Panc1 (cell line): ENCODE measurements at regions of chr7 and their contacts with region 1.

Region 1: DNA sequence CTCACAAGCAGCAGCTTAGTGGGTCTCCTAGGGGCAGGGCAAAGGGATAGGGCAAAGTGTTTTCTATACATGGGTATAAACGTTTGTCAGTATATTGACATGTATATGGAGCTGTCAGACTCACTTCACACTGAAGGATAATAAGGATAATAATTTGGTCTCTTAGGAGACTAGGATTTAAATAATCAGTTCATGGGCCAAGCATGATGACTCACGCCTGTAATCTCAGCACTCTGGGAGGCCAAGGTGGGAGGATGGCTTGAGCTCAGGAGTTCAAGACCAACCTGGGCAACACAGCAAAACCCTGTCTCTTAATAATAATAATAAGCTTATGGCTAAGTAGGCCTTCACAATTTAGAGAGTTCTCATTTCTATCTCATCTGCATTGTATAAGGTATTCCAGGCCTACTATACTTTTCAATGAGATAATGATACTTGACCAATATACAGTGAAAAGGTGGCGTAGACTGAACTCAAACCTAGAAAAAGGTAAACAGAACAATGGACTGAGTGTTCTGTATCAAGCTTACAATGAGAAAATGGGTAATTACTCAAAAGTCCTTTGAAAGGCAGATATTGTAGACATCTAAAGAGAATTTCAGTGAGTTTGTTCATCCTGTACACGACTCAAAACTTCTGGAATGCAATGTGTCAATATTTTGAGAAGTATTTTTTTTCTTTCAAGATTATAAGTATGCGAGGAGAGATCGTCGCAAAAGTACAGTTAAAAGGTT is 7.0 kb downstream of the GSAP start:
- DNase-seq: peak; percentile 48
- ATAC-seq: no peak
- H3K4me3 ChIP-seq: no peak overlapping the region
- H3K27ac ChIP-seq: no peak overlapping the region
- H3K4me1 ChIP-seq: no peaks in the 10 kb centered on the region
- H3K27me3 ChIP-seq: peaks cover 3% of the 10 kb centered on the region; the same call in 1 of the 2 replicates
- CTCF ChIP-seq: no peak

Region 2: DNA sequence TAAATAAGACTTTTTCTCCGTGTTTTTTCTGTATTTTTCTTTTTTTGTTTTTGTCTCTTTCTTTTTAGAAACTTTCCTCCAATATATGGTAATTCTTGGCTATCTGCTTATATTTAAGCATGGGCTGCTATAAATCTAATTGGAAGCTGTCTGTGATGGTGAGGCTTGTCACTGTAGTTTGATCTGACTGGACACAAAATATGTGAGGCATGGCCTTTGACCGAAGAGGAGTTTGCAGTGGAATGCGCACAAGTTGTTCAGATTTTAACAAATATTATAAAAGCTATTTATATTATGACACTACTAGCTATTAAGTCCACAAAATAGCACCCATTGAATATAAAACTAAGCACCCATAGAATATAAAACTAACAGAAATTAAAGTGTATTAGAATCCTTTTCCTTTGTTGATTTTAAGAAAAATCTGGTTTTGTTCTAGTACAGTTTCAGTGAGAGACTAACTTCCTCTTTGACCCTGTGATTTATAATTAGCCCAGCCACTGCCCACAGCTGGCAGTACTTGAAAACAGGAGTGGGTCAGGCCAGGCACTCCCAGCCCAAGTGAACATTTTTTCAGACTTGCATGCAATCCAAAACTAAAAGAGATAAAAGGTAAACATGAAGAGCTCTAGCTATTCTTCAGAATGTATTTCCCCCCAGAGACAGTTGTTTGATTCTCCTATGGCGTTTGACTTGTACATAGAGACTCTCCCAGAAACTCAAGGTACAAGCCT is 139.6 kb before region 1 on chr7:
- CTCF ChIA-PET with region 1: no interaction called
- POLR2A ChIA-PET with region 1: no interaction called
- in situ Hi-C with region 1: no loop called
- intact Hi-C with region 1: no loop called
- DNase-seq: no peak
- ATAC-seq: no peak
- H3K4me3 ChIP-seq: no peak overlapping the region
- H3K27ac ChIP-seq: no peak overlapping the region
- H3K4me1 ChIP-seq: no peaks in the 10 kb centered on the region
- H3K27me3 ChIP-seq: peaks cover 3% of the 10 kb centered on the region; the same call in 1 of the 2 replicates
- CTCF ChIP-seq: no peak

Region 3: GRCh38 chr7:77396894-77397547 is 12.2 kb before region 1 on chr7:
- CTCF ChIA-PET with region 1: no interaction called
- POLR2A ChIA-PET with region 1: interaction called, 10 read pairs
- in situ Hi-C with region 1: no loop called
- intact Hi-C with region 1: no loop called
- DNase-seq: no peak
- ATAC-seq: no peak
- H3K4me3 ChIP-seq: no peak overlapping the region
- H3K27ac ChIP-seq: no peak overlapping the region
- H3K4me1 ChIP-seq: no peaks in the 10 kb centered on the region
- H3K27me3 ChIP-seq: peaks cover 10% of the 10 kb centered on the region; the same call in 1 of the 2 replicates
- CTCF ChIP-seq: no peak